IMR-90 (cell line): ENCODE measurements at regions of chr16 and their contacts with region 1.

Region 1: GRCh38 chr16:2238838-2239675 is 2.8 kb downstream of the DNASE1L2 start:
- DNase-seq: no peak
- ATAC-seq: no peak; the same call in 1 of the 2 replicates
- H3K4me3 ChIP-seq: no peak overlapping the region
- H3K27ac ChIP-seq: no peak overlapping the region
- H3K4me1 ChIP-seq: peaks cover 5% of the 10 kb centered on the region; the same call in 1 of the 2 replicates
- H3K27me3 ChIP-seq: peaks cover 9% of the 10 kb centered on the region
- CTCF ChIP-seq: no peak
- POLR2A ChIP-seq: no peak
- RAD21 ChIP-seq: no peak

Region 2: GRCh38 chr16:2063861-2064260 is 175.2 kb before region 1 on chr16:
- CTCF ChIA-PET with region 1: no interaction called
- POLR2A ChIA-PET with region 1: no interaction called
- dilution Hi-C with region 1: no loop called
- in situ Hi-C with region 1: no loop called
- intact Hi-C with region 1: no loop called
- DNase-seq: no peak
- ATAC-seq: no peak
- H3K4me3 ChIP-seq: no peak overlapping the region
- H3K27ac ChIP-seq: no peak overlapping the region
- H3K4me1 ChIP-seq: no peaks in the 10 kb centered on the region
- H3K27me3 ChIP-seq: no peaks in the 10 kb centered on the region
- CTCF ChIP-seq: no peak
- POLR2A ChIP-seq: no peak
- RAD21 ChIP-seq: no peak

Region 3: DNA sequence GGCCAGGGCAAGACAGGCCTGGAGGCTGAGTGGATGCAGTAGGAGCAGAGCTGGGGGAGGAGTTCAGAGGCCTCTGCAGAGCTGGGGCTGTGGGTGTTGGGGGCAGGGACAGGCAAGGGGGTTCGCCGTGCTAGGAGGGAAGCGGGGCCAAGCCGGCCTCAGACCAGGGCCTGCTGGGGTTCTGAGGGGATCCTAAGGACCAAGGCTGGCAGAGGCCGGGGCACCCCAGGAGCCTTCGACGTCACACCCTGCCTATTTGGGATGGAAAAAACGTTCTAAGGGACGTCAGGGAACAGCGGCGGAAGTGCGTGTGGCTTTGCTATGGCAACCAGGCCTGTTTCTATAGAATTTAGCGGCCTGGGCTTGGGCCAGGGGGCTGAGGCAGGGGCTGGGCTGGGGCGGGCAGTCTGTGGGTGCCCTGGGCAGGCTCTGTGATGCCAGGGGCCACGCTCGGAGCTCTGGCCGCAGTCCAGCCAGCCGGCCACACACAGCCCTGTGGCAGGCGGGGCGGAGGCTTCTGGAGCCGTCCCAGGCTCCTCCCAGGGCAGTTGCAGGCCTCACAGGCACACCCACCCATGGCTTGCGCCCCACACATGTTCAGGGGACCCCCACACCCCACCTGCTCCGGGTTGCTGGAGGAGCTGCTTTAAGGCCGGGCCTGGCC is 79.8 kb before region 1 on chr16:
- CTCF ChIA-PET with region 1: no interaction called
- POLR2A ChIA-PET with region 1: no interaction called
- dilution Hi-C with region 1: no loop called
- in situ Hi-C with region 1: no loop called
- intact Hi-C with region 1: no loop called
- DNase-seq: peak; percentile 59
- ATAC-seq: no peak
- H3K4me3 ChIP-seq: no peak overlapping the region
- H3K27ac ChIP-seq: peak overlapping the region; percentile 67
- H3K4me1 ChIP-seq: peaks cover 37% of the 10 kb centered on the region
- H3K27me3 ChIP-seq: no peaks in the 10 kb centered on the region
- CTCF ChIP-seq: no peak
- POLR2A ChIP-seq: no peak
- RAD21 ChIP-seq: no peak

Region 4: DNA sequence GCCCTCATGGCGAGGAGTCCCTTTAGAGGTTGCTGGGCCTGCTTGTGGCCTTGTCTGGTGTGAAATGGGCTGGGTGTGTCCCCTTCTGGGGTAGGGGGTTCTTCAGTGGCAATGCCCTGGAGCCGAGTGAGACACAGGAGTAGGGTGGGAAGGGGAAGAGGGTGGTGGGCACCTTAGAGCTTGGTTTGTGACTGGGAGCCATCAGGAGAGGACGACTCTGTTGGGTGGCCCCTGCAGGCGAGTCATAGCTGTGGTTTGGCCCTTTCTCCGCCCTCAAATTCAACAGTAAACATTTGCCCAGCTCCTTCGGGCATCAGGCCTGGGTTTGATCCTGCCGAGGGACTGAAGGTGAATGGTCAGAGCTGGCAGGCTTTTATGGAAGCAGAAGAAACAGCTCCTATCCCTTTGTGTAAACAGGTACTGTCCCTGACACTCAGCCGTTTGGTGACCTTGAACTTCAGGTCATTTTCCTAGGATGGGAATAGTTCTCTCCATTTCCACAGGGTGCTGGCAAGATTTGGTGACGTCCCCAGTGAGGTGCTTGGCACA is 12.7 kb before region 1 on chr16:
- CTCF ChIA-PET with region 1: interaction called, 4 read pairs
- POLR2A ChIA-PET with region 1: interaction called, 10 read pairs
- dilution Hi-C with region 1: no loop called
- in situ Hi-C with region 1: no loop called
- intact Hi-C with region 1: no loop called
- DNase-seq: no peak
- ATAC-seq: no peak
- H3K4me3 ChIP-seq: no peak overlapping the region
- H3K27ac ChIP-seq: no peak overlapping the region
- H3K4me1 ChIP-seq: peaks cover 12% of the 10 kb centered on the region
- H3K27me3 ChIP-seq: no peaks in the 10 kb centered on the region
- CTCF ChIP-seq: no peak
- POLR2A ChIP-seq: no peak
- RAD21 ChIP-seq: no peak